ENCODE measurements at regions of chr14 and their contacts with region 1.

Region 1: DNA sequence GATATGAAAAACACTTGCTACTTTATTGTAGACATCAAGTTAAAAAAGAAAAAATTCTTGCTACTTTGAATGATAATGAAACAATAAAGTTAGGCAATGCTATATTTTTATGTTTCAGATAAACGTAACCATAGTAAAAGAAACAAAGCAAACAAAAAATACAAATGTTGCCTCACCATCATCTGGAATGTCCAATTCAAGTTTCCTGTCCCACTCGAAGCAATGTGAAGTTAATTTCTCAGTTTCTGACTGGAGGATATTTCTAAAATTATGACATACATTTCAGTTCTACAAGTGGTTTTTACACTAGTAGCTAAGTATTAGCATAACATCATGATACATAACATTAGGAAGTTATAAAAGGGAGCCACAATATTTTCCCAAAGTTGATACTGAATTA is 20.9 kb downstream of the DLGAP5 start:
- DNase-seq: no peak
- ATAC-seq: no peak
- H3K4me3 ChIP-seq: no peak overlapping the region
- H3K27ac ChIP-seq: no peak overlapping the region
- H3K4me1 ChIP-seq: no peaks in the 10 kb centered on the region
- H3K27me3 ChIP-seq: no peaks in the 10 kb centered on the region
- CTCF ChIP-seq: no peak

Region 2: DNA sequence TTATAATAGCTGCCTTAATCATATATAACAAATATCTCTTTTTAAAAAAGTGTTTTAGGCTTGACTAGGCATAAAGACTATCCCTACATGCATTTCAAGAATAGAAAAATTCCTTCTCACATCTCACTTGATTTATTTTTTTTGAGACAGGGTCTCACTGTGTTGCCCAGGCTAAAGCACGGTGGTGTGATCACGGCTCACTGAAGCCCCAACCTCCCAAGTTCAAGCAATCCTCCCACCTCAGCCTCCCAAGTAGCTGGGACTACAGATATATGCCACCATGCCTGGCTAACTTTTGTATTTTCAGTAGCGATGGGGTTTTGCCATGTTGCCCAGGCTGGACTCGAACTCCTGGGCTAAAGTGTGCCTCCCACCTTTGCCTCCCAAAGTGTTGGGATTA is 203.0 kb before region 1 on chr14:
- CTCF ChIA-PET with region 1: no interaction called
- POLR2A ChIA-PET with region 1: no interaction called
- in situ Hi-C with region 1: no loop called
- intact Hi-C with region 1: no loop called
- DNase-seq: no peak
- ATAC-seq: no peak
- H3K4me3 ChIP-seq: no peak overlapping the region
- H3K27ac ChIP-seq: no peak overlapping the region
- H3K4me1 ChIP-seq: no peaks in the 10 kb centered on the region
- H3K27me3 ChIP-seq: no peaks in the 10 kb centered on the region
- CTCF ChIP-seq: no peak

Region 3: GRCh38 chr14:55191203-55192053 is 20.9 kb after region 1 on chr14 and contains the start of gene DLGAP5:
- CTCF ChIA-PET with region 1: no interaction called
- POLR2A ChIA-PET with region 1: interaction called, 16 read pairs
- in situ Hi-C with region 1: no loop called
- intact Hi-C with region 1: no loop called
- DNase-seq: peak; percentile 91
- ATAC-seq: peak; percentile 98
- H3K4me3 ChIP-seq: peak within 1 kb of the TSS; percentile 90 to 96
- H3K27ac ChIP-seq: peak within 1 kb of the TSS; percentile 93
- H3K4me1 ChIP-seq: peaks cover 10% of the 10 kb centered on the region
- H3K27me3 ChIP-seq: no peaks in the 10 kb centered on the region
- CTCF ChIP-seq: no peak
- total RNA-seq, gene DLGAP5: 48.7 TPM